ENCODE measurements at regions of chr10 and their contacts with region 1.

Region 1: GRCh38 chr10:95133016-95133752 is 60.9 kb upstream of the ACSM6 start:
- DNase-seq: peak; percentile 74
- H3K4me3 ChIP-seq: no peak overlapping the region
- H3K27ac ChIP-seq: no peak overlapping the region
- H3K4me1 ChIP-seq: no peaks in the 10 kb centered on the region
- H3K27me3 ChIP-seq: no peaks in the 10 kb centered on the region
- CTCF ChIP-seq: peak; percentile 73 to 77
- POLR2A ChIP-seq: no peak

Region 2: GRCh38 chr10:94630017-94630688 is 503.0 kb before region 1 on chr10:
- CTCF ChIA-PET with region 1: interaction called, 4 read pairs
- POLR2A ChIA-PET with region 1: no interaction called
- dilution Hi-C with region 1: no loop called
- intact Hi-C with region 1: loop called (anchors 5 kb)
- DNase-seq: peak; percentile 44
- H3K4me3 ChIP-seq: no peak overlapping the region
- H3K27ac ChIP-seq: no peak overlapping the region
- H3K4me1 ChIP-seq: no peaks in the 10 kb centered on the region
- H3K27me3 ChIP-seq: peaks cover 0 to 4% of the 10 kb centered on the region in 2 experiments
- CTCF ChIP-seq: peak; percentile 18 to 39
- POLR2A ChIP-seq: no peak

Region 3: DNA sequence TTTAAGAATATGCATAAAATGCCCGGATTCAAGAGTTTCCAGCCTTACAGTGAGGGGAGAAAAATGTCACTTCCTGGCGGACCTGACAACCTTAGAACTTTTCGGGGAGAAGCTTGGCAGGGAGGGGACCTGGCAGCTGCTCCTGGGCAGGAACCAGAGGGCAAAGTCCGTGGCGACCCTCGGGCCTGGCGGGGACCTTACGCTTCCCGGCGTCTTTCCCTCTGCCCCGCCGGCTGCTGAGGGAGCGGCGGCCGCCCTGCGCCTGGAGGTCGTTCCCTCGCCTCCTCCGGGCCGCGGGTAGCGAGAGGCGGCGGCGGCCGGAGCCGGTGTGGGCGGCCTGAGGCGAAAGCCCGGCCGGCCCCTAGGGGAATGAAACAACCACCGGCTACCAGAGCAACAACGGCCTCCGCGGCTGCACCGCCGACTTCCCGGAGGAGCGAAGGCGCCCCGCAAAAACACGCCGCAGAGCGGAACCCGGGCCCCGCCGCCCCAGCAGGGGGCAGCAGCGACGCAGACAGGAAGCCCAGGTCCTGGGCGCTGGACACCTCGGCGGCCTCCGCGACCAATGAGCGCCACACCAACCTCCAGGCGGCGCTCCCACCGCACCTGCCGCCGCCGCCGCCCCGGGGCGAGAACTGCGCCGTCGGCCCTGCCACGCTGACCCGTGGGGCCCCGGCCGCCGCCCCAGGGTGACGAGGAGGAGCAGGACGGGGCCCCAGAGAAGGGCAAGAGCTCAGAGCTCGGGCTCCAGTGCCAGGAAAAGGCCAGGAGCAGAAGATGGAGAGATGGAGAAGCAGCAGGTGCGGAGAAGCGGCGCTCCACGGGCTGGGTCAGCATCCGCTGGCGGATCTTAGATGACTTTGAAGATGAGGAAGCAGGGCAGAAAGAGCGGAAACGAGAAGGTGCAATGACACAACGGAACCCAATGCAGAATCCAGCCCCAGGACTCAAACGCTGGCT is 50.4 kb after region 1 on chr10:
- CTCF ChIA-PET with region 1: interaction called, 6 read pairs
- POLR2A ChIA-PET with region 1: no interaction called
- dilution Hi-C with region 1: no loop called
- intact Hi-C with region 1: loop called (anchors 2 kb)
- DNase-seq: peak; percentile 80
- H3K4me3 ChIP-seq: peak overlapping the region; percentile 44 to 84 (median 80)
- H3K27ac ChIP-seq: peak overlapping the region; percentile 62
- H3K4me1 ChIP-seq: peaks cover 15% of the 10 kb centered on the region
- H3K27me3 ChIP-seq: peaks cover 0 to 10% of the 10 kb centered on the region in 2 experiments
- CTCF ChIP-seq: peak; percentile 96 to 99
- POLR2A ChIP-seq: peak; percentile 70

Region 4: GRCh38 chr10:95201736-95202135 is 68.6 kb after region 1 on chr10:
- CTCF ChIA-PET with region 1: interaction called, 13 read pairs
- POLR2A ChIA-PET with region 1: no interaction called
- dilution Hi-C with region 1: no loop called
- intact Hi-C with region 1: no loop called
- DNase-seq: no peak
- H3K4me3 ChIP-seq: no peak overlapping the region
- H3K27ac ChIP-seq: no peak overlapping the region
- H3K4me1 ChIP-seq: no peaks in the 10 kb centered on the region
- H3K27me3 ChIP-seq: peaks cover 0 to 1% of the 10 kb centered on the region in 2 experiments
- CTCF ChIP-seq: peak in 1 of 2 donors; percentile 7
- POLR2A ChIP-seq: no peak

Region 5: GRCh38 chr10:95208702-95209391 is 75.7 kb after region 1 on chr10:
- CTCF ChIA-PET with region 1: no interaction called
- POLR2A ChIA-PET with region 1: no interaction called
- dilution Hi-C with region 1: no loop called
- intact Hi-C with region 1: loop called (anchors 2 kb)
- DNase-seq: peak; percentile 34
- H3K4me3 ChIP-seq: no peak overlapping the region
- H3K27ac ChIP-seq: no peak overlapping the region
- H3K4me1 ChIP-seq: no peaks in the 10 kb centered on the region
- H3K27me3 ChIP-seq: no peaks in the 10 kb centered on the region
- CTCF ChIP-seq: peak; percentile 2 to 5
- POLR2A ChIP-seq: no peak

Region 6: DNA sequence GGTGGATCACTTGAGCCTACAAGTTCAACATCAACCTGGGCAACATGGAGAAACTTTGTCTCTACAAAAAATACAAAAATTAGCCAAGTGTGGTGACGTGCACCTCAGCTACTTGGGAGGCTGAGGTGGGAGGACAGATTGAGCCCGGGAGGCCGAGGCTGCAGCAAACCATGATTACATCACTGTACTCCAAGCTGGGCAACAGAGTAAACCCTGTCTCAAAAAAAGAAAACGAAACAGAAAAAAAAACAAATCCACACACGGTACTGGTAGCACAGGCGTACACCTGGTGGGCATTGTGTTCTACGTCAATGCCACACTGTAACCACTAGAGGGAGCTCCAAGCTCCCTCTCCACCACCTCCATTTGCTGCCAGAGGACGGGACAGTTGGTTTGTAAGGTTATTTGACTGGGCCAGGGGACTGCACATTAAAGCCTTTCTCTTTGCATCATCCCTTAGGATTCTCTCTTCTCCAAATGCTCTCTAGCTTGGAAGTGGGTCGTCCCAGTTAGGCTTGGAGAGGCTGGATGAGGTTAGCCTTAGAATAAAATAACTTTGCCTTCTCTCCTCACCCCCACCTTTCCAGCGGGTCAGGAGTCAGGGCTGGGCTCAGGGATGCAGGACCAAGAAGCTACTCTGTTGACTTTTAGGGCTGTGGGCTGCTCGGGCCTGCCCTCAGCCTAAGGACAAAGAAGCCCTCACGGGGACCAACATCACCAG is 297.2 kb after region 1 on chr10:
- CTCF ChIA-PET with region 1: interaction called, 5 read pairs
- POLR2A ChIA-PET with region 1: no interaction called
- dilution Hi-C with region 1: no loop called
- intact Hi-C with region 1: loop called (anchors 1 kb)
- DNase-seq: peak; percentile 61
- H3K4me3 ChIP-seq: no peak overlapping the region
- H3K27ac ChIP-seq: no peak overlapping the region
- H3K4me1 ChIP-seq: peaks cover 5% of the 10 kb centered on the region
- H3K27me3 ChIP-seq: peaks cover 0 to 2% of the 10 kb centered on the region in 2 experiments
- CTCF ChIP-seq: peak; percentile 89 to 95
- POLR2A ChIP-seq: no peak

Region 7: GRCh38 chr10:95601116-95601719 is 468.0 kb after region 1 on chr10:
- CTCF ChIA-PET with region 1: interaction called, 5 read pairs
- POLR2A ChIA-PET with region 1: no interaction called
- dilution Hi-C with region 1: no loop called
- intact Hi-C with region 1: loop called (anchors 1 kb)
- DNase-seq: peak; percentile 89
- H3K4me3 ChIP-seq: no peak overlapping the region
- H3K27ac ChIP-seq: no peak overlapping the region
- H3K4me1 ChIP-seq: no peaks in the 10 kb centered on the region
- H3K27me3 ChIP-seq: peaks cover 0 to 7% of the 10 kb centered on the region in 2 experiments
- CTCF ChIP-seq: peak; percentile 90 to 96
- POLR2A ChIP-seq: no peak